Adrenal gland (tissue), 19 donors: ENCODE measurements at regions of chr11 and their contacts with region 1.

Region 1: DNA sequence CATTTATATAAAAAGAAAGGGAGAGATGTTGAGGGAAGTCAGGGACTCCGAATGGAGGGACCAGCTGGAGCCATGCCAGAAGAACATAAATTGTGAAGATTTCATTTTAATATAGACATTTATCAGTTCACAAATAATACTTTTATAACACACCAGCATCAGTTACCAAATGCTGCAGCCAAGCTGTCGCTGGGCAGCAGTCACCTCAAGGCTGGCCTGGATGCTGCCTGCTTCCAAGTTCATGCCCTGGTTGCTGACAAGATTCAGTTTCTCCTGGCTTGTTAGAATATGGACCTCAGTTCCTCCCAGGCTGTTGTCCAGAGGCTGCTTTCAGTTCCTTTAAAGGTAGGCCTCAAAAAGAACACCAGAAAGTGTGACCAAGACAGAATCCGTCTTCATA is 30.8 kb upstream of the ALDH3B2 start:
- DNase-seq: no peak
- H3K4me3 ChIP-seq: no peak overlapping the region
- H3K27ac ChIP-seq: no peak overlapping the region
- H3K4me1 ChIP-seq: no peaks in the 10 kb centered on the region
- H3K27me3 ChIP-seq: peaks cover 2% of the 10 kb centered on the region
- CTCF ChIP-seq: no peak
- POLR2A ChIP-seq: no peak

Region 2: DNA sequence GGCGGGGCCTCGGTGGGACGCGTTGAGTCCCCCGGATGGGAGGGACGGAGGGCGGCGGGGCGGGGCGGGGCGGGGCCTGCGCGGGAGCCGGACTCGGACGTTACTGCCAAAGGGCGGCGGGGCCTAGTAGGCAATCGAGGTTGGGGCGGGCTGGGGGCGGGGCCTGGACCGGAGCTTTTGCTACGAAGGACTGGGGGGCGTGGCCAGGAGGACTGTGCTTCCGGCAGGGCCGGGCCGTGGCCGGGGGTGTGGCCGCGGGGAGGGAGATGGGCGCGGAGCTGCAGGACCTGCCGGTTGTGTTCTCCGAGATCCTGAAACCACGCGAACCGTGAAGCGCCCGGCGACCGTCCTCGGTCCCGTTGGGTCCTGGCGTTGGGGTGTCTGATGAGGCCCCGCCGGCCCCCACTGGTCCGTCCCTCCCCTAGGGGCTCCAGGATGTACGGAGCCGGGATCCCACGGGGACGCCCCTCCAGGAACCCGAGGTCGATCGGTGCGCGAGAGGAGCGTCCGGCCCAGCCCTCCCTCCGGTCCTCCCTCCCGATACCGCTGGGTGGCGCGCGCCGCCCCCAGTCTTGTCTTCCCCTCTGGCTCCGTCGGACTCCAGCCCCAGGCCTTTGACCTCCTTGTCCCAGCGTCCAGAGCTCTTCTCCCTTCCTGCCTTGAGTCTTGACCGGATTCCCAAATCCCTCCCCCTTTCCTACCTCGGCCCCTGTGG is 74.9 kb before region 1 on chr11:
- intact Hi-C with region 1: loop called in 1 of 2 experiments (anchors 5 kb)
- DNase-seq: peak; percentile 99
- H3K4me3 ChIP-seq: peak overlapping the region in 2 of 4 donors; percentile 49 to 74
- H3K27ac ChIP-seq: peak overlapping the region in 4 of 5 donors; percentile 79 to 98 (median 93)
- H3K4me1 ChIP-seq: peaks cover 0 to 14% of the 10 kb centered on the region in 2 donors
- H3K27me3 ChIP-seq: no peaks in the 10 kb centered on the region
- CTCF ChIP-seq: peak; percentile 46 to 77 (median 67)
- POLR2A ChIP-seq: peak; percentile 55 to 76